ENCODE measurements at regions of chr20 and their contacts with region 1.

Region 1: DNA sequence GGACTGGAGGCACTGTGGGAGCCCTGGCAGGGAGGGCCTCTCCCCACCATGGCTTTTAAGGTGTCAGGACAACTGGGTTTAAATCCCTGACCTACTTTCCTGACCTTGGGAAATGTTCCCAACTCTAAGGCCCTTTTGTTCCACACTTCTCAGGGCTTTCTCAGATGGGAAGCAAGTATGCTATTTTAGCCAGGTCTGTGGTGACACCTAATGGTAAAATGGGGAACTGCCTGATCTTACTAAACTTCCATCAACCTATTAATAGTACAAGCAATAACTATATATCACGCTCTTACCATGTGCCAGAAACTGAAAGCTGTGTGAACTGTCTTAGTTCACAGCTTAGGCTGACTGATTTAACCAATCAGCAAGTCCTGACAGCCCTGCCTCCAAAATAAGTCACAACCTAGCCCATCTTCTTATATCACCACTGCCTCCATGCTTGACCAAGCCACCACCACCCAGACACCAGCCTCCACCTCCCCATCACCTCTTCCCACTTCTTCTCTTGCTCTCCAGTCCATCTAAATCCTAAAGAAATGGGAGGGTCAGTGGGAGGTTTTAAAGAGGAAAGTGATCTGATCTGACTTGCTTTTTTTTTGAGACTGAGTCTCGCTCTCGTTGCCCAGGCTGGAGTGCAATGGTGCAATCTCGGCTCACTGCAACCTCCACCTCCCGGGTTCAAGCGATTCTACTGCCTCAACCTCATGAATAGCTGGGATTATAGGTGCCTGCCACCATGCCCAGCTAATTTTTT is 6.9 kb upstream of the BLCAP start:
- DNase-seq: peak; percentile 75
- H3K4me3 ChIP-seq: no peak overlapping the region
- H3K27ac ChIP-seq: no peak overlapping the region
- H3K4me1 ChIP-seq: no peaks in the 10 kb centered on the region
- H3K27me3 ChIP-seq: no peaks in the 10 kb centered on the region
- CTCF ChIP-seq: peak; percentile 82 to 87

Region 2: DNA sequence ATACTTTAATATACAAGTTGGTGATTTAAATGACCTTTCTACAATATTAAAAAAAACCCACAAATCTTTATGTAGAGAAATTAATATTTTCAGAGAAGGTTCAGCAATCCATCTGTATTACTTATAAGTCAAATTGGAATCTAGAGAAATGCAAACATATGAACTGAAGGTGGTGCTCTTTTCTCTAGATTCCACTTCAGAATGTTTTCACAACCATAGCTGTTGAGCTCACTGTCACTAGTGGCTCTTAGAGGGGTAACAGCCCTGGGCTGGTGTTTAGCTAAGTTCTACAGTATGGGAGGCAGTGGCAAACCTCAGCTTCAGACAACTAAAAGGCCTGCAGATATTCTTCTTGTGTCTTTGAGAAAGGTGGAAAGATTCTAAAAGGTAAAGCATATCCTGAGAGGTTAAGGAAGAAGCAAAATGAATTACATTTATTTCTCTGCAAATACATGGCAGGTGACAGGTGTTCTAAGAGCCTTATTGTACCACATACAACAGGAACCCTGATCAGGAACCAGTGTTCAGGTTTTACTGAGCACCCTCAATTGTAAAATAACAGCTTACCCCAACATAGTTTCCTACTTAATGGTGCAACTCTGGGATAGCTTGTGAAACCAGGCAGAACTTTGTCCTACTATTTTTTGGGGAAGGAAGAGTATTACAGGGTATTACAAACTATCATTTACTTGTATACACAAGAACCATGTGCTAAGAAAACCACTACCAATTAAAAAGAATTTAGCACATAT is 526.5 kb before region 1 on chr20:
- CTCF ChIA-PET with region 1: no interaction called
- dilution Hi-C with region 1: no loop called
- in situ Hi-C with region 1: no loop called
- intact Hi-C with region 1: loop called (anchors 2 kb)
- DNase-seq: peak; percentile 4
- H3K4me3 ChIP-seq: no peak overlapping the region
- H3K27ac ChIP-seq: no peak overlapping the region
- H3K4me1 ChIP-seq: no peaks in the 10 kb centered on the region
- H3K27me3 ChIP-seq: no peaks in the 10 kb centered on the region
- CTCF ChIP-seq: peak in 1 of 2 donors; percentile 41

Region 3: DNA sequence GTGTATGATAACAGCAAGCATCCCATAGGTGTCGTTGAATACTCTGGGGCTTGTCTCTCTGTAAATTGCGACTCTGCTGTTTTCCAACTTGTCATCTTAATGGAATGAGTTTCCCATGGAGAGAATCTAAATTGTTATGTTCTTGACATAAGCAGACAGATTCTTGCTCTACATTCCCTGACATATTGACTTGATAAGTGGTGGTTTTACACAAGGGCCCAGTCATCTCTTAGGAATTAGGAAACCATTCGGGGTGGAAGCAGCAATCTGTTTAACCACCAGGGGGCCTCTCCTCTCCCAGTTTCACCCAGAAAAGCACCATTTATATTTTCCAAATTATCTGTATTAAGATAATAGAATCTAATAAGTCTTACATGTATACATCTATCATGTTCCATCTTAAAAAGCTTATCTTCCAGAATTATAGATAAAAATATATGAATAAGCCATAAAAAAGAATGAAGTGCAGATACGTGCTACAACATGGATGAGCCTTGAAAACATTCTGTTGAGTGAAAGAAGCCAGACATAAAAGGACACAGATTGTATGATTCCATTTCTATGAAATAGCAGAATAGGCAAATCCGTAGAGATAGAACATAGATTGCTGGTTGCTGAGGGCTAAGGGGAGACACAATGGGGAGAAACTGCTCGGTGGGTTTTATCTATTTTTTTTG is 332.2 kb before region 1 on chr20:
- CTCF ChIA-PET with region 1: no interaction called
- dilution Hi-C with region 1: no loop called
- in situ Hi-C with region 1: loop called in 1 of 2 experiments (anchors 5 kb)
- intact Hi-C with region 1: loop called (anchors 1 kb)
- DNase-seq: peak; percentile 77
- H3K4me3 ChIP-seq: no peak overlapping the region
- H3K27ac ChIP-seq: peak overlapping the region; percentile 64
- H3K4me1 ChIP-seq: peaks cover 7% of the 10 kb centered on the region
- H3K27me3 ChIP-seq: no peaks in the 10 kb centered on the region
- CTCF ChIP-seq: peak; percentile 80 to 88

Region 4: DNA sequence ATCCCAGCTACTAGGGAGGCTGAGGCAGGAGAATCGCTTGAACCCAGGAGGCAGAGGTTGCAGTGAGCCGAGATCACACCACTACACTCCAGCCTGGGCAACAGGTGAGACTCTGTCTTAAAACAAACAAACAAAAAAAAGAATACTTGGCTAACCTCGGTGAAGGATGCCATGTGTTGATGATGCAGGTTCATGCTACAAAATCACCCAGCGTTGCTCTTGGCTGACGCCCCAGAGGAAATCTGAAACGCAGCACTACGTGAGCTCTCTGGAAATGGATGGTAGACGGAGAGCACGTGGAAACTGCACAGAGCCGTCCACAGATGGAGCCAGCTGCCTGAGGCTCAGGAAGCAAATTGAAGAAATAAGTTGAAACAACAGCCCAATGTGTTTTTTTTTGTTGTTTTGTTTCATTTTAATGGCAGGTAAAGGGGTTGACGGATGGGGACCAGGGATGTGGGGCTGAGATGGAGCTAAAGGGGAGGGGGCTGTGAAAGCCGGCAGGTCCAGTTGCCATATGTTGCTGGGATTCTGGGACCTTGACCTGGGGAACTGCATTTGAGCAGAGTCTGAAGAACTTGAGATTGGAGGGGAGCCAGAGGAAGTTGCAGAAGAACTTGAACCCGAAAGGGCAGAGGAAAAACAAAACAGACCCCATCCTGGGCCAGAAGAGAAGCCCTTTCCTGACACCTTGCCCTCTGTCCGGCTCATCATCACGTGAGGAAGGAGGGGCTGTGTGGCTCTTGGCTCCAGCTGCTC is 257.9 kb before region 1 on chr20:
- CTCF ChIA-PET with region 1: interaction called, 5 read pairs
- dilution Hi-C with region 1: no loop called
- in situ Hi-C with region 1: loop called in 1 of 2 experiments (anchors 5 kb)
- intact Hi-C with region 1: loop called (anchors 1 kb)
- DNase-seq: peak; percentile 66
- H3K4me3 ChIP-seq: no peak overlapping the region
- H3K27ac ChIP-seq: no peak overlapping the region
- H3K4me1 ChIP-seq: peaks cover 4% of the 10 kb centered on the region
- H3K27me3 ChIP-seq: no peaks in the 10 kb centered on the region
- CTCF ChIP-seq: peak; percentile 28 to 45

Region 5: GRCh38 chr20:37392421-37393178 is 142.0 kb before region 1 on chr20:
- CTCF ChIA-PET with region 1: no interaction called
- dilution Hi-C with region 1: no loop called
- in situ Hi-C with region 1: no loop called
- intact Hi-C with region 1: loop called (anchors 1 kb)
- DNase-seq: no peak
- H3K4me3 ChIP-seq: no peak overlapping the region
- H3K27ac ChIP-seq: no peak overlapping the region
- H3K4me1 ChIP-seq: peaks cover 23% of the 10 kb centered on the region
- H3K27me3 ChIP-seq: no peaks in the 10 kb centered on the region
- CTCF ChIP-seq: peak; percentile 23 to 34

Region 6: DNA sequence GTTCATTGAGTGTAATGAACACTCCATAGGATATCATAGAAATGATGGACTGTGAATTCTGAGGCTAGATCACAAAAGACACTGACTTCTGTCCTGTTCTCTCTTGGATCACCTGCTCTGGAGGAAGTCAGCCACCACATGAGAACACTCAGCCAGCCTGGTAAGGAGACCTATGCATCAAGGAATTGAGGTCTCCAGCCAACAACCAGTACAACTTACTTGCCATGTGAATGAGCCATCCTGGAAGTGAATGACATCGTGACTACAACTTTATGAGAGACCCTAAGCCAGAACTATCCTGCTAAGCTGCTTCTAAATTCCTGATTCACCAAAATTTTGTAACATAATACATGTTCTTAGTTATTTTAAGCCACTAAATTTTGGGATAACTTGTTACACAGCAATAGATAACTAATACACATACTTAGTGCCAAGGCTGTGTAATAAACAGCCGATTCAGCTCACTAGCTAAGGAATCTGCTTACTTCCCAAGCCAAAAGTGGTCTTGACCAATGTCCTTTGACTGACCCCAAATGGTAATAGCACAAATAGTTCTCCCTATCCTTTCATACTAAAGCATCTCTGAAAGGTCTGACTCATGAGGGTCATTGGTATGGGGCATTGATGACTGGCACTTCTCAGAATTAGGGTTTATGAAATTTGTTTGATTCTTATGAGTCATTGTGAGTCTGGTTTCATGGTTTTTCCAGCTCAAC is 152.3 kb after region 1 on chr20:
- CTCF ChIA-PET with region 1: no interaction called
- dilution Hi-C with region 1: no loop called
- in situ Hi-C with region 1: no loop called
- intact Hi-C with region 1: no loop called
- DNase-seq: peak; percentile 59
- H3K4me3 ChIP-seq: no peak overlapping the region
- H3K27ac ChIP-seq: no peak overlapping the region
- H3K4me1 ChIP-seq: no peaks in the 10 kb centered on the region
- H3K27me3 ChIP-seq: no peaks in the 10 kb centered on the region
- CTCF ChIP-seq: no peak